OCI-LY7 (cell line): ENCODE measurements at regions of chrX and their contacts with region 1.

Region 1: GRCh38 chrX:76454456-76454927 is 27.0 kb downstream of the MAGEE1 start:
- DNase-seq: peak; percentile 28
- H3K4me3 ChIP-seq: no peak overlapping the region
- H3K27ac ChIP-seq: no peak overlapping the region
- H3K4me1 ChIP-seq: no peaks in the 10 kb centered on the region
- CTCF ChIP-seq: peak; percentile 68

Region 2: GRCh38 chrX:76279000-76279399 is 175.5 kb before region 1 on chrX:
- CTCF ChIA-PET with region 1: no interaction called
- POLR2A ChIA-PET with region 1: no interaction called
- intact Hi-C with region 1: loop called (anchors 5 kb)
- DNase-seq: peak; percentile 37
- H3K4me3 ChIP-seq: no peak overlapping the region
- H3K27ac ChIP-seq: no peak overlapping the region
- H3K4me1 ChIP-seq: no peaks in the 10 kb centered on the region
- CTCF ChIP-seq: peak; percentile 77

Region 3: GRCh38 chrX:76433219-76433618 is 21.3 kb before region 1 on chrX:
- CTCF ChIA-PET with region 1: no interaction called
- POLR2A ChIA-PET with region 1: no interaction called
- intact Hi-C with region 1: no loop called
- DNase-seq: no peak
- H3K4me3 ChIP-seq: no peak overlapping the region
- H3K27ac ChIP-seq: no peak overlapping the region
- H3K4me1 ChIP-seq: no peaks in the 10 kb centered on the region
- CTCF ChIP-seq: no peak